ENCODE measurements at regions of chr1 and their contacts with region 1.

Region 1: DNA sequence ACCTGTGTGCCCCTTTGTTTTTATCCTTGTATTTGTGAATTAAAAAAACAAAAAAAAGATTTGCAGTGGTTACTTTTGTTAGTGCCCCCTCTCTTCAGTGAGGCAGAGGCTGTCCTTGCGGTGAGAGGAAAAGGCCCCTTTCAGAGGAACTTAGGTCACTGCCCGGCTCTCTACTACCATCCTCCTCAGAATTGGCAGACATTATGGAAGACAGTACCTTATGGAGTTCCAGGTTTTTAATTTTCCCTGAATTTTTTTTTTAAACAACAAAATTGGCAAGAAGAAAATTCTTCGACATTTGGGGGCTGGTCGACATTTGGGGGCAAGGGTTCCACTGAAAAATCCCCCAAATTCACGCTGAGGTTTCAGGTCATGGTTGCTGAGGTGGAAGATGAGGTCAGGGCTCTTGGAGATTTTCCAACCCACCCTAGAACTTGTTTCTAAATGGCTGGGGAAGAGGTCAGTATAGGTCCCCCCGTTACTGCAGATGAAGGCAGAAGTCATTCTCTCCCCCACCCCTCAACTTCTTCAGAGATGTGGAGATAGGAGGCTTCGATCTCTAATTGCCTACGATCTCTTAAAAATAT is 5.3 kb downstream of the RXFP4 start:
- DNase-seq: no peak
- H3K4me3 Mint-ChIP-seq: peak overlapping the region; percentile 59
- H3K27ac Mint-ChIP-seq: peak overlapping the region; percentile 86
- H3K4me1 Mint-ChIP-seq: peaks cover 40% of the 10 kb centered on the region
- H3K27me3 Mint-ChIP-seq: no peaks in the 10 kb centered on the region

Region 2: GRCh38 chr1:155884031-155884960 is 62.4 kb before region 1 on chr1:
- intact Hi-C with region 1: no loop called
- DNase-seq: no peak
- H3K4me3 Mint-ChIP-seq: no peak overlapping the region
- H3K27ac Mint-ChIP-seq: no peak overlapping the region
- H3K4me1 Mint-ChIP-seq: no peaks in the 10 kb centered on the region
- H3K27me3 Mint-ChIP-seq: no peaks in the 10 kb centered on the region

Region 3: DNA sequence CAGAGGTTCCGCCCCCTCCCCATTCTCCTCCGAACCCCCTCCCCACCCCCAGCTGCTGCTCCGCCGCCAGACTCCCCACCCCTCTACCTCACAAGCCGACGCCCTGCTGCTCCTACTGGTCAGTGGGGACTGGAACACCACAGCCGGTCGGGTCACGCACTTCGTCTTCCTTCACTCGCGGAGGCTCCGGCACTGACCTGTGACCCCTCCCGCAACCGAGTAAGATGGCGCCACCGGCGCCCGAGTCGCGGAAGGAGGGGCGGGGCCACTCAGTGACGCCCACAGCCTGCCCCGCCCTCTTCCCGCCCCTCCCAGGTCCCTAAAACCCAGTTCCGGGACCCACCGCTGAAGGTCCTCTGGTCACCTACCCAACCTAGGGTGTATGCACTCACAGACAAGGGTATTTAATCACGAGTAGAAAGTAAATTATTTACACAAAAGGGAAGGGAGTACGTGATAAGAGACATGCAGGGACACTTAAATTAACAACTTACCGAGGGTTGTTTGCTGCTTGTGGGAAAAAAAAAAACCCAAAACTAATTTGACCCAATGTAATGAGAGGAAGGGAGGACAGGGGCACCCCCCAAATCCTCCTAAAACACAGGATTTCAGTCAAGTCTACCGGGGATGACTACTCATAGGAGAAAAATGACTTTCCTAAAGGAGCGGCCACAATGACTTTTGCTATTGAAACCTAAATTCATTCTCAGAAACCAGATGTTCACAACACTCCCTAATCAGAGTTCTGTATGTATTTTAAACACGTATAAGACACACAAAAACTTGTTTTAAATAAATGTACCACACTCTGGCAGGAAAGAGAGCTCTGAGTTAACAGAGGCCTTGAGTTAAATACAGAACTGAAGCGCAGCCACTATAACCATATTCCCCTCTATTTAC is 35.3 kb before region 1 on chr1 and contains the start of gene RIT1:
- intact Hi-C with region 1: loop called (anchors 1 kb)
- DNase-seq: peak; percentile 81
- H3K4me3 Mint-ChIP-seq: peak within 1 kb of the TSS; percentile 98
- H3K27ac Mint-ChIP-seq: peak within 1 kb of the TSS; percentile 97
- H3K4me1 Mint-ChIP-seq: peaks cover 23% of the 10 kb centered on the region
- H3K27me3 Mint-ChIP-seq: peaks cover 2% of the 10 kb centered on the region
- total RNA-seq, gene RIT1: 20.2 and 22.3 TPM in 2 replicates

Region 4: DNA sequence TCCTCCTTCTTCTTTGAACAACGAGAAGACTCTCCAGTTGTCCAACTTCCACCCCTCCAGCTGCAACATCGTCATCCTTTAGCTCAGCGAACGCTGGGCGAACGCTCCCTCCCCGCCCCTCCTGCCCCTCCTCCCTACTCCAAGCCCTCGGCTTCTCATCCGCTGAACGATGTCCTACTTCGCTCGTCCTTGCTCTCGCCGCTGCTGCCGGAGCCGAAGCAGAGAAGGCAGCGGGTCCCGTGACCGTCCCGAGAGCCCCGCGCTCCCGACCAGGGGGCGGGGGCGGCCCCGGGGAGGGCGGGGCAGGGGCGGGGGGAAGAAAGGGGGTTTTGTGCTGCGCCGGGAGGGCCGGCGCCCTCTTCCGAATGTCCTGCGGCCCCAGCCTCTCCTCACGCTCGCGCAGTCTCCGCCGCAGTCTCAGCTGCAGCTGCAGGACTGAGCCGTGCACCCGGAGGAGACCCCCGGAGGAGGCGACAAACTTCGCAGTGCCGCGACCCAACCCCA is 695.1 kb after region 1 on chr1 and contains the start of gene BCAN:
- intact Hi-C with region 1: no loop called
- DNase-seq: no peak
- H3K4me3 Mint-ChIP-seq: peak within 1 kb of the TSS; percentile 45
- H3K27ac Mint-ChIP-seq: no peak within 1 kb of the TSS
- H3K4me1 Mint-ChIP-seq: peaks cover 42% of the 10 kb centered on the region
- H3K27me3 Mint-ChIP-seq: peaks cover 72% of the 10 kb centered on the region
- total RNA-seq, gene BCAN: not detected in 2 replicates